Head of caudate nucleus (tissue), 42 donors: ENCODE measurements at regions of chr1 and their contacts with region 1.

Region 1: DNA sequence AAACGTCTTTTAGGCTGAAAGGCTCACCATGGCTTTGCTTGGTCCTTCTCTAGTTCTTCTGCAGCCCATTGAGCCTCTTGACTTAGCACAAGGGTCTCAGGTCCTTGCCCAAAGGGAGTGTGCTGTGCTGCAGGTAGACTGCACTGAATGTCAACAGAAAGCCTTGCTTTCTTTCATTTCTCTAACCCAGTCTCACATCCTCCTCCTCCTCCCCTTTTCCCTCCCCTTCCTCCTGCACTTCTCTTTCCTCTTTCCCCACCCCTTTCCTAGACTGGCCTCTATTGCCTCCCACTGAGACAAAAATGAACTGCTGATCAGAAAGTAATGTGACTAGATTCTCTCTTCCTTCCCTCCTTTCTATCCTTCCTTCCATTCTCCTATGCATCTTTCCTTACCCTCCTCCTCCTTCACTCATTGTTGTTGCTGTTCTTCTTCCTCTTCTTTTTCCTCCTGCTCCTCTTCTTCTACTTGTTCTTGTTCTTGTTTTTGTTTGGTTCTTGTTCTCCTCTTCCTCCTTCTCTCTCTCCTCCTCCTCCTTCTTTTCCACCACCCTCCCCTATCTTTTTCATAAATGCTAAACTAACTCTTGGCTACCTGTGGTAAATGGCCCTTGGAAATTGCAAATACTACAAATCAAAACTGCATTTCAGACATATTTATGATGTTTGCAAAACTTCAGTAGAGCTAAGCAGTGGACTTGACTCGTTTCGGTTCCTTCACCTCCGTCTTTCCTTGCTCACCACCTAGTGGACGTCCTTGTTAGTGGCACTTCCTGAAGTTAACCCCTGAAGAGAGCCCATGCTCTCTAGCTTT is at the start of gene SELL:
- DNase-seq: peak in 39 of 42 donors; percentile 7 to 85 (median 60)

Region 2: GRCh38 chr1:169601093-169601881 is 110.4 kb before region 1 on chr1:
- intact Hi-C with region 1: loop called (anchors 5 kb)
- DNase-seq: peak in 2 of 42 donors; percentile 16 to 36

Region 3: DNA sequence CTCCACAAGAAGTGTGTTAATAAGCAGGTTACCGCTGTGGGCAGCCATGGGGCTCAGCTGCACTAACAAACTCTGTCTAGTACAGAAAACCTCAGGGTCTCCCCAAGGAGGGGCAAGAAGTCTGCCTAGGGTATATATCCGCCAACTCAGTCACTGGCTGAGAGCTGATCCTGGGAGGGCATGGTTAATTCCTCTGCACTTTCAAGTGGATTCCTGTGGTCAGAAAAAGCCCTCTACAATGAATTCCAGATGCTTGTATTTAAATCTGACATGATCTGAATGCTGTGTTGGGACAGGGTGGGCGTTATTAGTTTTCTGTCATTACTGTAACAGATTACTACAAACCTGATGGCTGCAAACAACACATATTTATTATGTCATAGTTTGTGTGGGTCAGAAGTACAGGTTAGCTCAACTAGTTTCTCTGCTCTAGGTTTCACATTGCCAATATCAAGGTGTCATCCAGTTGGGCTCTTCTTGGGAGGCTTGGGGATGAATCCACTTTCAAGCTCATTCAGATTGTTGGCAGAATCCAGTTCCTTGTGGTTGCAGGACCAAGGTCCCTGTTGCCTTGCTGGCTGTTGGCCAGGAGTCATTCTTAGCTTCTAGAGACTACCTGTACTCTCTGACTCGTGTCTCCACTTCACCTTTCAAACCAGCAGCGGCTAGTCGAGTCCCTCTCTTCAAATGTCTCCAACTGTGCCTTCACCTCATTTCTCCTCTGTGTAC is 30.2 kb after region 1 on chr1:
- intact Hi-C with region 1: no loop called
- DNase-seq: no peak

Region 4: DNA sequence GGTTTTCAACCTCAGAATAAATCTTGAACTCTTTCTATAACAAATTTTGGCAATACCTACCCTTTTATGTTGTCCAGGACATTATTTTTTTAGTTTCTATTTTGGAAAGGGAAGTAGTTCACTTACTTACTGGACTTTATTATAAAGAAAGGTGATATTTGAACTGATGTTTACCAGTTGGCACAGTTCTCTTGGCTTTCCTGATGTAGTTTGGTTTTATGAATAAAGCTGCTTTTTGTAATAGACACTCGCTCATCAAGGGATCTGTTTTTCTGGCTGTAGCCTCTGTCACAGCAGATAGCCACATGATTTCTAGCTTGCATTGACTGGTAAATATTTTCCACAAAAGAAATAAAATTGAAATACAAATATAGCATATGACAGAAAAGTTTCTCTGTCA is 124.0 kb after region 1 on chr1:
- intact Hi-C with region 1: no loop called
- DNase-seq: no peak